BJ (cell line): ENCODE measurements at regions of chr22 and their contacts with region 1.

Region 1: GRCh38 chr22:50030297-50031188 is 18.0 kb upstream of the IL17REL start:
- DNase-seq: no peak
- H3K4me3 ChIP-seq: no peak overlapping the region
- H3K27me3 ChIP-seq: peaks cover 3% of the 10 kb centered on the region; the same call in 1 of the 2 replicates
- CTCF ChIP-seq: peak; percentile 89

Region 2: DNA sequence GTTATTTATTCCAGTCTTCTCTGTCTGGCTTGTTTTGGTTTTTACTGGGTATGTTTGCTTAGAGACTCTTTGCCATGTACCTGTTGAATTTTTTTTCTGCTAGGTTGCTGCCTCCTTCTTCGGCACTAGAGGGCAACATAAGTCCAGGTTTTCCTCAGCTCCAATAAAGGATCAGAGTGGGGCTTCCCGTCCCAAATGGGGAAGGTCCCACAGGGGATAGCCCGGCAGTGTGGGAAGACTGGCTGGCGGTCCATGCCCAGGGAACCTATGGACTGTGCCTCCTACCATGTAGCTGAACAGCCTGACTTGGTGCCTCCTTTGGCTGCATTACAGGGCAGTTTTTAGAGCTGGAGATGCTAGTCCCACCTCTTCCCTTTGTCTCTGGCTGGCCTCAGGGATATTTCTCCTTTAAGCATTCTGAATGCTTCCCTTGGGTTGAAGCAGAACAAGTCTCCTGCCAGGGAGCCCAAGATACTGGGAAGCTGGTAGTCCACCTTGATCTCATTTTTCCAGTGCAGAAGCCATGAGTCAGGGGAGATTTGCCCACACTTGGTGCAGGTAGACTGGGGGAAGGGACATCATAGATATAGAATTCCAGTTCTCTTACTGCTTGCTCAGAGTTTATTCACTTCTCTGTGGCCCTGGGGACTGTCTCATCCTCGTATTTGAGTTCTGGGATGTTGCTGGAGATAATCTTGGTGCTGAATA is 263.0 kb before region 1 on chr22:
- CTCF ChIA-PET with region 1: interaction called, 31 read pairs
- POLR2A ChIA-PET with region 1: no interaction called
- DNase-seq: no peak
- H3K4me3 ChIP-seq: no peak overlapping the region
- H3K27me3 ChIP-seq: no peaks in the 10 kb centered on the region
- CTCF ChIP-seq: peak; percentile 75

Region 3: GRCh38 chr22:49930739-49931412 is 99.7 kb before region 1 on chr22:
- CTCF ChIA-PET with region 1: interaction called, 103 read pairs
- POLR2A ChIA-PET with region 1: no interaction called
- DNase-seq: peak; percentile 19
- H3K4me3 ChIP-seq: no peak overlapping the region
- H3K27me3 ChIP-seq: no peaks in the 10 kb centered on the region
- CTCF ChIP-seq: peak; percentile 65

Region 4: DNA sequence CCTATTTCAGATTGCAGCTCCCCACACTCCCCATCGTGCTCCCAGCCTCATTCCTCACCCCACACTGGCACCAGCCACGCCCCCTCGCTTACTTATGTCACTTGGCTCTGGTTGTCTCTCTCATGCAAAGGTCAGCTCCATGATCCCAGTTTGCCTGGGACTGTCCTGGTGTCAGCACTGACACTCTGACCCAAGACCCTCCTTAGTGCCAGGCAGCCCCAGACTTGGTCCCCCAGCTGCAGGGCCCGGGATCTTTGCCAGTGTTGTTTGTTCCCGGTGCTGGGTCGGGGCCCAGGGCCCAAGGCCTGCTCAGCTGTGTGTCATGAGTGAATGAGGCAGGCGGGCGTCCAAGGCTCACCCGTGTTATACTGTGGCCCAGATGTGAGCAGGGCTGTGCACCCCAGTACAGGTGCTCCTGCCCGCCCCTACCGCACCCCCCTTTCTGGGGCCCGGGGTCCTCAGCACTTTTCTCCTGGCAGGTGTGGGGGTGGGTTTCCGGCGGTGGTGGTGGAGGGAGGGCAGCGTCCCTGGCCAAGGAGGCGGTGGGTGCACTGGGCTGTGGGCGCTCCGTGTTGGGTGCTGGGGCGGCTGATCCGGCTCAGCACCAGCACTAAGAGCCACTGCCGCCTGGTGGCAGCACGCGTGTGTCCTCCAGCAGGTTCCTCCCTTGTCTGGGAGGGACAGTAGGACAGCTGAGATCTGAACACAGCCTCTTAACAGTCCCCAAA is 37.5 kb before region 1 on chr22:
- CTCF ChIA-PET with region 1: interaction called, 15 read pairs
- POLR2A ChIA-PET with region 1: no interaction called
- DNase-seq: no peak
- H3K4me3 ChIP-seq: no peak overlapping the region
- H3K27me3 ChIP-seq: no peaks in the 10 kb centered on the region
- CTCF ChIP-seq: peak; percentile 85

Region 5: GRCh38 chr22:50012716-50013181 is 17.8 kb before region 1 on chr22 and contains the start of gene IL17REL:
- CTCF ChIA-PET with region 1: interaction called, 18 read pairs
- POLR2A ChIA-PET with region 1: no interaction called
- DNase-seq: no peak
- H3K4me3 ChIP-seq: no peak within 1 kb of the TSS
- H3K27me3 ChIP-seq: peaks cover 37% of the 10 kb centered on the region
- CTCF ChIP-seq: peak; percentile 33
- polyA plus RNA-seq, gene IL17REL: not detected in 2 replicates

Region 6: DNA sequence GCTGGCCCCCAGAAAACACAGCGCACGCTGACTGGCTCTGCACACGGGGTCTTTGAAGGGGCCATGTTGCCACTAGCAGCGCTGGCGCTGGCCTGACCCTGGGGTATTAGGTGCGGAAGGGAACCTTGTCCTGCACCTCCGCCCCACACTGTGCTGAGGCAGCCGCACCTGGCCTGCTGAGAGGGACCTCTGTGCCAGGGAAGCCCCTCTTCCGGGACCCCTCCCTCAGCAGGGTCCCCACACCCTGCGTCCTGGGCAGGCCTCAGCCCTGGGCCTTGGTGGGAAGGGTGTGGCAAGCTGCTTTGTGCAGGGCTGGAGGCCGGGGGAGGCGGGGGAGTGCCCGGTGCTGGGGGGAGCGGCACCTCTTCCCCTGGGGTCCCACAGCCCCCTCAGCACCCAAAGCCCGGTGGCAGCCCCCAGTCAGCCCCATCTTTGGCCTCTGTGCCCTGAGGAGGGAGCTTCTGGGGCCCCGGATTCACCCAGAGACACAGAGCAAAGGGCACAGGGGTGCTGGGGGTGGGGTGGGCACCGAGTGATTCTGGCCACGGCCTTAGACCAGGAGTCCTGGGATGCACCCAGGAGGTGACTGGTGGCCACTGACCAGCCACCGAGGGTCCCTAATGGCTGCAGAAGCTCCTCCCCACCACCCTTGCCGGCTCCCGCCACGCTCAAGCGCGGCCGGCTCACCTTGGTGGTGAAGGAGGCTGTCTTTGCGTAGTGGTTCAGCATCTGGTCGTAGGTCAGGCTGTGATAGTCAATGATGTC is 16.1 kb after region 1 on chr22:
- CTCF ChIA-PET with region 1: no interaction called
- POLR2A ChIA-PET with region 1: no interaction called
- DNase-seq: no peak
- H3K4me3 ChIP-seq: no peak overlapping the region
- H3K27me3 ChIP-seq: no peaks in the 10 kb centered on the region
- CTCF ChIP-seq: no peak

Region 7: GRCh38 chr22:50123119-50123518 is 92.6 kb after region 1 on chr22:
- CTCF ChIA-PET with region 1: no interaction called
- POLR2A ChIA-PET with region 1: interaction called, 10 read pairs
- DNase-seq: no peak
- H3K4me3 ChIP-seq: no peak overlapping the region
- H3K27me3 ChIP-seq: no peaks in the 10 kb centered on the region; the same call in 1 of the 2 replicates
- CTCF ChIP-seq: no peak